ENCODE measurements at regions of chr5 and their contacts with region 1.

Region 1: DNA sequence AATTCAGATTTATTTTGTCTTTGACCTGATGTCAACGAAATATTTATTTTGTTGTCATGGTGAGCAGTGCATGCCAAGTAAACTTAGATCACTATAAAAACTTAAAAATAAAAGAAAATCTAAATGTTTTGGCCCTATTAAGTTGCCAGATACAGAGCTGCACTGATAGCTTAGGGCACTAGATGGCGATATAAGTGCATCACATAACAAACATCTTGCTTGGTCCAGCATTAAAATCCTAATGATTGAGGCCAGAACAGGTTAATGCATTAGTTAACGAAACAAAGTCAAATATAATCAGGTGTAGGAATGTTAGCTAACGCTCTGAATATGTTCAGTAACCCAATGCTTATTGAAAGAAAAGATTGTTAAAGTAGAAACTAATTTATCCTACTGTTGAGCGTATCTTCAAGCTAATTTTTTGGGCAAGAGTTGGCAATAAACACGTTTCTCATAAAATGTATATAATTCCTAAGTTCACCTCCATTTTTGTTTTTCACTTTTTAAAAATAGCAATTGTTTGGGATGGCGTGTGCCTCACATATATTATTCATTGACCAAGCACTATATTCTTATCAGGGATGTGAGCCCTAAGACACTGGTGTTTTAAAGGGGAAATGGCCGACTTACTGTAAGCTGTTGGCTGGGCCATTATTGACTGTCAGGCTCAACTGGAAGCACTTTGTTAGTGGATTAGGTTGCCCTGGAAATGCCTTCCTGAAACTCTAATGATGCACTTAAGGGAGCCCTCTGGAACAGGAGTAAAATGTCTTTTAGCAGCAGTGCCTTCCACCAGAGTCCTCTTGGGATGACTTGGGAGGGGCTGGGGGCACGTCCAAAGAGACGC is 33.3 kb downstream of the KCTD16 start:
- DNase-seq: peak; percentile 82
- ATAC-seq: peak; percentile 65
- H3K4me3 ChIP-seq: no peak overlapping the region
- H3K27ac ChIP-seq: no peak overlapping the region
- H3K4me1 ChIP-seq: 0 out of 2 replicates have a peak, but pooled peaks cover 2% of the 10 kb centered on the region
- H3K27me3 ChIP-seq: peaks cover 12% of the 10 kb centered on the region
- CTCF ChIP-seq: peak; percentile 94
- POLR2A ChIP-seq: no peak
- RAD21 ChIP-seq: peak; percentile 88

Region 2: DNA sequence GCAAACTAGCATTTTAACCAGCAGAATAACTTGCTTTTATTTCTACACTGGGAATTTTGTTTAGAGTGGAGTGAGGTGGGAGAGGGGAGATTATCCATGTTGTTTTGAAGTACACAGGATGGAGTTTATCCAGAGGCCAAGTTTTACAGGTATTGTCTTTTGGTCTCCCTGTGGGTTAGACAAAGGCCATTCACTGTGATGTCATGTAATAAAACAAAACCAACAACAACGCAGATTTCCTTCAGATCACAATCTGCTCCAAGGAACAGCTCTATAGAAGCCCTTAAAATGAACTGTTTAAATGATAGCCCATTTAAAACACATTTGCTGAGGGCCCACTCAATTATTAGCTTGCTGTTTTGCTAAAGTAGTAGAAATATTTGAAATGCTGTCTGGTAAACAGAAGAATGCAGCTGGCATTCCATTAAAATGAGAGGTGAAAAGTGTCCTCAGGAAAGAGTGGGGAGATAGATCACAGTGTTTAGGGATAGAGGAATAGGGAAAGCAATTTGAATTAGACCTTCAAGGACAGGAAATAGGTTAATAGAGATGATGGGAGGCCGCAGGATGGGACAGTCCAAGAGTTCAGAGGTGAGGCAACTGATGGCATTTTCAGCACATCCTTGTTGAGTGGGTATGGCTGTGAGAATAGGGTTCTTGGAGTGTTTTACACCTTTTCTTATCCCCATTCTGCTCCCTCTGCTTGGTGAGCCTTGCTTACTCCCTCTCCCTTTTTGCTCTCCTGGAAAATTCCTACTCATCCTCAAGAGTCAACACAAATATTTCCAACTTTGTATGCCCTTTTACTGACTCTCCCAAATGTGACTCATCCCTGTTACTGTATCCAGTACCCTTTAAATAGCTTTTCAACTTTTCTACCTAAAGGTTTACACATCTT is 660.4 kb before region 1 on chr5:
- CTCF ChIA-PET with region 1: no interaction called
- POLR2A ChIA-PET with region 1: no interaction called
- dilution Hi-C with region 1: no loop called
- in situ Hi-C with region 1: no loop called
- intact Hi-C with region 1: no loop called
- DNase-seq: peak; percentile 76
- ATAC-seq: peak; percentile 93
- H3K4me3 ChIP-seq: no peak overlapping the region
- H3K27ac ChIP-seq: peak overlapping the region; percentile 98
- H3K4me1 ChIP-seq: peaks cover 10% of the 10 kb centered on the region
- H3K27me3 ChIP-seq: no peaks in the 10 kb centered on the region
- CTCF ChIP-seq: no peak
- POLR2A ChIP-seq: no peak
- RAD21 ChIP-seq: no peak

Region 3: DNA sequence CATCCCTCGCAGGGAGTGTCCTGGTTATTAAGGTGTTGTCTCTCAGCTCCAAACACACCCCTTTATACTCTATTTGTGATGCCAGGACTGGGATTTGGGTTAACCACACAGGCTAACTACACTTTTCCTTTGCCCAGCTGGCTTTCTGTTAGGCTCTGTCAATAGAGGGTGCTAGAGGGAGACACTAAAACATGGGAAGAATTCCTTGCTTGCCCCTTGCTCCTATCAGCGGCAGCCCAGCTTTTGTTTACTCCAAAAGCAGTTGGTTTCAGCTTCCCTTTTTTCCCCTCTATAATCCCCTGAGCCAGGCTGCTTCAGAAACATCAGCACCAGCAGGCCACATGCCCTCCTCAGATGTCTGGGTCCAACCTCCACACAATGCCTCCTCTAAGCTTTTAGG is 263.8 kb after region 1 on chr5:
- CTCF ChIA-PET with region 1: interaction called, 5 read pairs
- POLR2A ChIA-PET with region 1: no interaction called
- dilution Hi-C with region 1: no loop called
- in situ Hi-C with region 1: no loop called
- intact Hi-C with region 1: loop called (anchors 2 kb)
- DNase-seq: peak; percentile 56
- ATAC-seq: peak; percentile 95
- H3K4me3 ChIP-seq: no peak overlapping the region
- H3K27ac ChIP-seq: no peak overlapping the region
- H3K4me1 ChIP-seq: no peaks in the 10 kb centered on the region
- H3K27me3 ChIP-seq: no peaks in the 10 kb centered on the region; the same call in 1 of the 2 replicates
- CTCF ChIP-seq: peak; percentile 72
- POLR2A ChIP-seq: no peak
- RAD21 ChIP-seq: peak; percentile 65

Region 4: GRCh38 chr5:144531188-144531587 is 327.2 kb after region 1 on chr5:
- CTCF ChIA-PET with region 1: no interaction called
- POLR2A ChIA-PET with region 1: no interaction called
- dilution Hi-C with region 1: no loop called
- in situ Hi-C with region 1: no loop called
- intact Hi-C with region 1: no loop called
- DNase-seq: no peak
- ATAC-seq: no peak
- H3K4me3 ChIP-seq: no peak overlapping the region
- H3K27ac ChIP-seq: no peak overlapping the region
- H3K4me1 ChIP-seq: no peaks in the 10 kb centered on the region
- H3K27me3 ChIP-seq: no peaks in the 10 kb centered on the region
- CTCF ChIP-seq: no peak
- POLR2A ChIP-seq: no peak
- RAD21 ChIP-seq: no peak

Region 5: DNA sequence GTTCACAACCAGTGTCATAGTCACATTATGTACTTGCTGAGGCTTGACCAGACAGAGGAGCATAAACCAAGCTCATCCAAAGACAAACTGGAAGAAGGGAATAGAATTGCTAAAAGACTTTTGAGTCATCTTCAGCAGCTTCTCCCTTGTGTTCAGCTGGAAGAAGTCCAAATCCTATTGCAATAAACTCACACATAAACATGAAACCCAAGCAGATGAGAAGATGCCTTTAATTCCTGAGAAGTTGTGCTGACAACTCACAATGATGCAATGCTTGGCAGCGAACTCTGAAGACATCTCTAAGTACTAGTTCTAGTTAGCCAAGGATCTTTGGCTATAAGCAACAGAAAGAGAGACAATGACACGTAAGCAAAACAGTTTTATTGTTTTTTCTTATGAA is 608.8 kb after region 1 on chr5:
- CTCF ChIA-PET with region 1: no interaction called
- POLR2A ChIA-PET with region 1: no interaction called
- dilution Hi-C with region 1: no loop called
- in situ Hi-C with region 1: no loop called
- intact Hi-C with region 1: loop called (anchors 10 kb)
- DNase-seq: peak; percentile 90
- ATAC-seq: peak; percentile 87
- H3K4me3 ChIP-seq: no peak overlapping the region
- H3K27ac ChIP-seq: no peak overlapping the region
- H3K4me1 ChIP-seq: no peaks in the 10 kb centered on the region
- H3K27me3 ChIP-seq: no peaks in the 10 kb centered on the region
- CTCF ChIP-seq: no peak
- POLR2A ChIP-seq: no peak
- RAD21 ChIP-seq: no peak

Region 6: GRCh38 chr5:145718956-145719355 is 1515.0 kb after region 1 on chr5:
- CTCF ChIA-PET with region 1: no interaction called
- POLR2A ChIA-PET with region 1: no interaction called
- dilution Hi-C with region 1: no loop called
- in situ Hi-C with region 1: loop called (anchors 25 kb)
- intact Hi-C with region 1: loop called (anchors 2 kb)
- DNase-seq: peak; percentile 65
- ATAC-seq: peak; percentile 80
- H3K4me3 ChIP-seq: no peak overlapping the region
- H3K27ac ChIP-seq: no peak overlapping the region
- H3K4me1 ChIP-seq: no peaks in the 10 kb centered on the region
- H3K27me3 ChIP-seq: no peaks in the 10 kb centered on the region
- CTCF ChIP-seq: peak; percentile 67
- POLR2A ChIP-seq: no peak
- RAD21 ChIP-seq: peak; percentile 73

Region 7: DNA sequence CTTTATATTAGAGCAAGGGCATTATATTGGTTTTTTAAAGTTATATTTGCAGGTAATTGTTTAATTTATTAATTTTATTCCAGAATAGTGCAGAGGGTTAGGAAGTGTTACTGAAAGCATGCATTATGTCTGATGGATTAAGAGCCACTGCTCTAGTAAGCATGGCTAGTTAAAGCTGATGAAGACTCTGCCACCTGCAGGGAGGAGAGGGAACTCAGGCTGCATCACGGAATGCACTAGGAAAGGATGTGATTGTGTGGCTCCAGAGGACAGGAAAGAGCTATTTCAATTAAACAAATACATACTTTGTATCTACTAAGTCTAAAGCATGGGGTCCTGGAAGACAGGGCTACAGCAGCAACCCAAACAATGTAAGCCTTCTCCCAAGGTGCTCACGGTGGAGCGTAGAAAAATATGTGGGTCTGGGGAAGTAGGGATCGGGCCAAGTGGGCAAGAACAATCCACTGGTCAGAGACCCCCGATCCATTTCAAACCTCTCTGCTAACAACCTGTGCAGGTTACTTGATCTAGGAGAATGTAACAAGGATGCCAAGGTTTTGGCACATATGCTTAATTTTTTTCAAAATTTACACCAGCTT is 1684.1 kb after region 1 on chr5:
- CTCF ChIA-PET with region 1: interaction called, 5 read pairs
- POLR2A ChIA-PET with region 1: no interaction called
- dilution Hi-C with region 1: no loop called
- in situ Hi-C with region 1: no loop called
- intact Hi-C with region 1: loop called (anchors 2 kb)
- DNase-seq: peak; percentile 62
- ATAC-seq: peak; percentile 95
- H3K4me3 ChIP-seq: no peak overlapping the region
- H3K27ac ChIP-seq: no peak overlapping the region
- H3K4me1 ChIP-seq: no peaks in the 10 kb centered on the region
- H3K27me3 ChIP-seq: peaks cover 8% of the 10 kb centered on the region
- CTCF ChIP-seq: peak; percentile 68
- POLR2A ChIP-seq: no peak
- RAD21 ChIP-seq: peak; percentile 71

Measured in IMR-90 (cell line).